Activated T-helper 1 cell treated with anti-CD3 and anti-CD28 coated beads, Interleukin-12 subunit alpha, Interleukin-12 subunit beta, Interleukin-2, Interleukin-4 antibody, amounts not matched to agents 30 ng/mL and 10 ng/mL and 1 ng/mL, durations not matched to agents 14 hours and 24 hours and 36 hours (primary cell): ENCODE measurements at regions of chr6 and their contacts with region 1.

Region 1: DNA sequence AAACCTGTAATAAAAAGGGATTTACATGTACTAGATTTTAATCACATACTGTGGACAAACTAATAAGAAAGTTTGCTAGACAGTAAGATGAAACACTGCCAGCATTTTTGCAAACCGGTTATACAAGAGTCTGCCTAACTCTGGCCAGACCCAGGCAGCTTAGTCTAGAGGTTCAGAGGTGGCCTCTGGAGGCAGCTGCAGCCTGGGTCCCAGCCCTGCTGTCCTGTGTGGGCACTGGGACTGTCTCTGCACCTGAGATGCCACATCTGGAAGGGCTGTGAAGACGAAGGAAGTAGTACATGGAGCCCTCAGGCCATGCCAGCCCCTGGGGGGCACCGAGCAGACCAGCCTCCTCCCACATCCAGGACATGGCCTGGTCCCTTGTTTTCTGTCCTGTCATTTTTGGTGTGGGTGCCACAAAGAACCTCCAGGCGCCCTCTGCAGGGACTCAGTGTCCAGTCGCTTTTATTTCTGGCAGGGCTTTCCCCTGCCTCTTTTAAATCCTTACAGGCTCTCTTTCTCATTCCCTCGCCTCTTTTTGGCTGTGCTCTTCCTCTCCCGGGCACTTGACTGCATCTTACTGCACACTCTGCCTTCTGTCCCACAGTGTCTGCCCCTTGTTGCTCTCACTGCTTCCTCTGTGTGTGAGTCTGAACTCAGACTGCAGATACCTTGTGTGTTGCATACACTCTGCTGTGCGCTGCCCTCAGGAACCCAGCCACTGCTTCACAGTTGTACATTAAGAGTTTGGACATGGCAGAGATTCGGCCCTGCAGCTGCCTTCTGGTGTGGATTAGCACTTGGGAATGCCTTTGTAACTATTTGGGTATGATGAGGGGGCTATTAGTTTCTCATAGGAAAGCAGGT is 216.7 kb downstream of the ZDHHC14 start:
- DNase-seq: no peak
- H3K4me3 Mint-ChIP-seq: no peak overlapping the region
- H3K27ac Mint-ChIP-seq: no peak overlapping the region
- H3K4me1 Mint-ChIP-seq: peaks cover 12% of the 10 kb centered on the region
- H3K27me3 Mint-ChIP-seq: no peaks in the 10 kb centered on the region

Region 2: DNA sequence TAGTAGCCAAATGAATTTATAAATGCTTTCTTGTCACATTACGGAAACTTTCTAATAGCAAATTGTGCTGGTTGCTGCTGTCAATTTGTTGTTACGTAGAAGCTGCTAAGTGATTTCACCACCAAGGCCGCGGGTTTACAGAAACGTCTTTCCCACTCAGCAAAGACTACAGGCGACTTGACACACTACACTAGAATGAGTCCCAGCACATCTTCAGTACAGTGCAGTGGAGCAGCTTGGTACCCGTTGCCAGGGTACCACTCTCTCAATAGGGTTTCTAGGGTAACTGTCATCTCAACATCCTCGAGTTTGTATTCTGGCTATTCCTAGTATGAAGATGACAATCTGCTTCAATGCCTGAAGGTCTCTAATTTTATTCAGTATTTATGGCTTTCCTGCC is 239.4 kb before region 1 on chr6:
- intact Hi-C with region 1: no loop called
- DNase-seq: no peak
- H3K4me3 Mint-ChIP-seq: no peak overlapping the region
- H3K27ac Mint-ChIP-seq: no peak overlapping the region
- H3K4me1 Mint-ChIP-seq: peaks cover 2% of the 10 kb centered on the region
- H3K27me3 Mint-ChIP-seq: peaks cover 50% of the 10 kb centered on the region

Region 3: DNA sequence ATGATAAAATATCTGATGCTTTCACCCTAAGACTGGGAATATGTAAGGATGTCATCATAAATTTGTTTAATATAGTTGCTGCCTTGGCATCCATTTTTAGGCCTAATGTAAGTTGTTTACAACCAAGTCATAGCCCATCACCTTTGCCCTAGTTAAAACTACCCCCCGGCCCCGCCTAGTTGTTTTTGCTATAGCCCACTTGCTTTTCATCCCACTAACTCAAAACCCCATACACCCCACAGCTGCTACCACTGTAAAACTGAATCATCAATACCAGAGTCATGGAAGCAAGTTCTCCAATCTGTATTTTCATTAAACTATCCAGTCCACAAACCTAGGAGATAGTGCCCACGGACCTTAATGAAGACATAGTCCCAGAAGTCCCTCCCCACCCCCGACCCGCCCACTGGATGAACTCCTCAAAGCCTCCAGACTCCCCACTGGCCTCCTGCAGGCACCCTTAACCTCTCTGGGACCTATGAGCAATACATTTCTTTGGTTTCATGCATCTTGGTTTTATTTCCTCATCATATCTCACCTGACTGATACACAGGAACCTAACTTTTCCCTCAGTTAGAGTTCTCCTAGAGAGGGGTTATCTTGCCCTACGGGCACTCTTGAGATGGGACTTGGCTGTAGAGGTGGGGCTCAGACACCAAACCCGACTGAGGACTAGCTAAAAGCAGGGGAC is 229.2 kb before region 1 on chr6:
- intact Hi-C with region 1: loop called (anchors 5 kb)
- DNase-seq: no peak
- H3K4me3 Mint-ChIP-seq: no peak overlapping the region
- H3K27ac Mint-ChIP-seq: peak overlapping the region; percentile 52
- H3K4me1 Mint-ChIP-seq: peaks cover 20% of the 10 kb centered on the region
- H3K27me3 Mint-ChIP-seq: peaks cover 46% of the 10 kb centered on the region

Region 4: DNA sequence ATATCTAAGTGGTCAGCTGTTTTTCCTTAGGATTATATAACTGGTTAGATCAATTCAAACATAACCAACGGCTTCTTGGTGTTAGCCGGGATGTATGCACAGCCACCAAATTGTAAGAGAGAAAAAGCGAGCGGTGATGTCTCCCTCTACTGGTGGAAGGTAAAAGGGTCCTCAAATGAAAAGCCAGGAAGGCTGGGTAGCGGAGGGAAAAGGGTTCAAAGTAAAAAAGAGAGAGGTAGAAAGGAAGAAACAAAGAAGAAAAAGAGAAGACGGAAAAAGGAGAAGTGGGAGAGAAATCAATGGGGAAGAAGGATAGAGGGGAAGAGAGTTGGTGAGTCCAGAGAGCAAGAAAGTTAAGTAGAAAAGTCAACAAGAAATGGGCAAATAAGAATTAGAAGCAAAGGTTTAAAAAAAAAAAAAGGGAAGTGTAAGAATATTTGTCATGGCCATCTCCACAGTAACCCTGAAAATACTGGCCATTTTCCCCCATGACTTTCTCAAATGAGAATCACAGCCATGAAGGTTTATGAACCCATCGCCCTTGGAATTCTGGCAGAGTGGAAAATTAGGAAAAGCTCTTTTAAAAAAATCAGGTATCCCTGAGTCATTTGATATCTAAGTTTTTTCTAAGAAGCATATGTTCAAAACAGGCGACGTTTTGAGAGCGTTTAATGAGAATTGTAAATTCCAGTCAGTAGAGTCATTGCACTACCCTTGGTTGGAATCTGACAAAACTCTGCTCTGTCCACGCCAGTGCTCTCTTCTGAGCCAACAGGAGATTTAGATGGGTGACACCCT is 69.7 kb after region 1 on chr6:
- intact Hi-C with region 1: loop called (anchors 2 kb)
- DNase-seq: peak; percentile 30
- H3K4me3 Mint-ChIP-seq: no peak overlapping the region
- H3K27ac Mint-ChIP-seq: peak overlapping the region; percentile 41
- H3K4me1 Mint-ChIP-seq: peaks cover 12% of the 10 kb centered on the region
- H3K27me3 Mint-ChIP-seq: peaks cover 10% of the 10 kb centered on the region

Region 5: GRCh38 chr6:157732021-157732417 is 134.3 kb after region 1 on chr6:
- intact Hi-C with region 1: no loop called
- DNase-seq: no peak
- H3K4me3 Mint-ChIP-seq: no peak overlapping the region
- H3K27ac Mint-ChIP-seq: no peak overlapping the region
- H3K4me1 Mint-ChIP-seq: no peaks in the 10 kb centered on the region
- H3K27me3 Mint-ChIP-seq: peaks cover 10% of the 10 kb centered on the region